ENCODE measurements at regions of chr5 and their contacts with region 1.

Region 1: GRCh38 chr5:96662725-96663513 is 743 bp downstream of the CAST start:
- DNase-seq: peak; percentile 94 to 96
- ATAC-seq: peak; percentile 80 to 88
- H3K4me3 ChIP-seq: peak overlapping the region; percentile 93
- H3K27ac ChIP-seq: peak overlapping the region; percentile 98 to 100
- H3K4me1 ChIP-seq: peaks cover 63% of the 10 kb centered on the region
- CTCF ChIP-seq: no peak
- EP300 ChIP-seq: no peak
- POLR2A ChIP-seq: peak; percentile 73
- RAD21 ChIP-seq: no peak

Region 2: GRCh38 chr5:95835682-95836385 is 827.1 kb before region 1 on chr5:
- CTCF ChIA-PET with region 1: no interaction called
- POLR2A ChIA-PET with region 1: interaction called, 17 read pairs
- DNase-seq: no peak
- ATAC-seq: no peak
- H3K4me3 ChIP-seq: peak overlapping the region; percentile 49
- H3K27ac ChIP-seq: peak overlapping the region; percentile 97 to 100
- H3K4me1 ChIP-seq: peaks cover 39% of the 10 kb centered on the region
- CTCF ChIP-seq: no peak
- EP300 ChIP-seq: no peak
- POLR2A ChIP-seq: no peak
- RAD21 ChIP-seq: no peak

Region 3: DNA sequence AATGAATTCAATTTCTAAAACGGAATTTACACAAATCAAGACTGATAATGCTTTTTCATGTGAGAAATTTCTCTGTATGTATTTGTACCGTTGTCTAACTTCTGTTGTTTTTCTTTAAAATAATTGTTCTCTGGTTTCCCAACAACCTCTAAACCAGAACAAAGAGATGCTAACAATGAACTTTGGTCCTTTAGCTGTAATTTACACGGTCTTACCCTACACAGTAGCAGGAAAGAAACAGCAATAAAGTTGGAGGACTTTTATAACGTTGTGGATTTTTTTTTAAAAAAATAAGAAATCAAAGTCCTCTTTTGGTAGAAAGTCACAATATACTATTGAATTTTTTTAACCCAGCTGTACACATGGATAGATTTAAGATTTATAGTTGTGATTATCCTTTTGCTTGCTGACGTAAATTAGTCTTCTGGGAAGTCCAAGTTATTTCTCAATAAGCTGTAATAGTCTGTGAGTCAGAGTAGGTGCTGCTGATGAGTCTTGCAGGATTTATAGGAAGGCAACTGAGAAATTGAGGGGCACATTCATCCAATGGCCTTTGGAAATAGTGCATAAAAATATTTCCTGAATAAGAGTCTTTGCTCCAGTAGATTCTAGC is 153.1 kb before region 1 on chr5:
- CTCF ChIA-PET with region 1: no interaction called
- POLR2A ChIA-PET with region 1: interaction called, 10 read pairs
- DNase-seq: peak; percentile 87 to 90
- ATAC-seq: peak; percentile 90 to 92
- H3K4me3 ChIP-seq: no peak overlapping the region
- H3K27ac ChIP-seq: peak overlapping the region; percentile 92 to 98
- H3K4me1 ChIP-seq: peaks cover 45% of the 10 kb centered on the region
- CTCF ChIP-seq: no peak
- EP300 ChIP-seq: peak; percentile 97 to 98
- POLR2A ChIP-seq: no peak
- RAD21 ChIP-seq: peak in 1 of 2 experiments; percentile 68; a peak in 3 of 5 replicates

Region 4: DNA sequence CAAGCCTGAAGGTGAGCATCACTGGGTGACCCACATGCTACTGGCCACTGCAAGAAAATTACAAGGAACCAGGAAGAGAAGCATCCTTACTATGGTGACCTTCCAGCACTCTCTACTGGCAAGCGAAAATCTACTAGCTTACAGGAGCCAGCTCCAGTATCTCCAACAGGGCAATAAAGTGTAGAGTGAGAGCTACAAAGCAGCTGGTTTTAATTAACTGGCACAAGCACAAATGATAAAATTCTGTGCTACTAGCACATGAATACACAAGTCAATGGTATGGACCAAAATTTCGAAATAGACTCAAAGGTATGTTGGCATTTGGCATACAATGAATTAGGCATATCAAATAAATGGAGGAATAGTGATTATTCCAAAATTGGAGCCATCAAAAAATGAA is 114.0 kb before region 1 on chr5:
- CTCF ChIA-PET with region 1: no interaction called
- POLR2A ChIA-PET with region 1: no interaction called
- DNase-seq: peak in 1 of 2 experiments; percentile 20
- ATAC-seq: peak in 1 of 2 experiments; percentile 54; a peak in 3 of 6 replicates
- H3K4me3 ChIP-seq: no peak overlapping the region
- H3K27ac ChIP-seq: peak overlapping the region in 1 of 2 experiments; percentile 29; a peak in 1 of 6 replicates
- H3K4me1 ChIP-seq: no peaks in the 10 kb centered on the region; the same call in 2 of the 3 replicates
- CTCF ChIP-seq: no peak
- EP300 ChIP-seq: no peak
- POLR2A ChIP-seq: no peak
- RAD21 ChIP-seq: 0 out of 5 replicates have a peak, but pooled peaks have one; percentile 12 to 16

Region 5: GRCh38 chr5:96629774-96630173 is 33.1 kb before region 1 on chr5:
- CTCF ChIA-PET with region 1: no interaction called
- POLR2A ChIA-PET with region 1: interaction called, 12 read pairs
- DNase-seq: peak; percentile 44 to 61
- ATAC-seq: peak; percentile 69 to 75; a peak in 5 of 6 replicates
- H3K4me3 ChIP-seq: no peak overlapping the region
- H3K27ac ChIP-seq: peak overlapping the region; percentile 62 to 77
- H3K4me1 ChIP-seq: peaks cover 60% of the 10 kb centered on the region
- CTCF ChIP-seq: no peak
- EP300 ChIP-seq: no peak
- POLR2A ChIP-seq: no peak
- RAD21 ChIP-seq: no peak

Region 6: DNA sequence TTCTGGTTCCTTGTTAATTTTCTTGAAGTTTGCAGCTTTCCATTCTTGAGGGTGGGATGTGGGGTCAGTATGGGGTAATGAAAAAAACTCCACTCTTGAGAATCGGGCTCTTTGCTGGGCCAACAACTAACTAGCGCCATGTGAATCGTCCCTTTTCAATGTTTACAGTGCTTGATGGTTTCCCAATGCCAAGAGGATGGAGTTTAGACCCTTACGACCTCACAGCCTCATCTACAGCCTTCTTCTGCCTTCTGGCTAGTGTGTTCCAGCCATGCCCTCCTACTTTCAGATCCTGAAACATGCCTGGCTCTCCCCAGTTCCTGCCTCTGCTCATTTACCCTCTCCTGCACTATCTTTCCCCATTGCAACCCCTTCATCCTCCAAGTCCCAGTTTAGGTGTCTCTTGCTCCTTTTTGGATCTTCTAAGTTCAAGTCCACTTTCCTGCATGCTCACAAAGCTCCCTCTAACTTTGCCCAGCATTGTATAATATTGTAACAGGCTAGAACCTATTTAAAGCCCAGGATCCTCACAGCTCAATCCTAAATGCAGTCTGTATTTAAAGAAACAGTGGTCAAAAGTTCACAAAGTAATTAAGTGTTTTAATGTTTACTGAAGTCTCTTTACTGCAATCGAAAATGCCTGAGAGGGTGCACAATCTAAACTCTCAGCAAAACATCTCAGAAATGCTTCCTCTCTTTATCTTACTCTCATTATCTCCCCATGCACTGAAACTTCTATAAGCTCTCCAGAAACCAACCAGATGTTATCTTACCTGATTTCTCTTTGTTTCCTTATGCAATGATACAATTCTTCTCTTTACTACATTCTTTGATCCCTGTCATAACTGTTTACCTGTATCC is 21.3 kb before region 1 on chr5:
- CTCF ChIA-PET with region 1: interaction called, 3 read pairs
- POLR2A ChIA-PET with region 1: interaction called, 12 read pairs
- DNase-seq: peak in 1 of 2 experiments; percentile 63
- ATAC-seq: peak; percentile 77 to 88
- H3K4me3 ChIP-seq: no peak overlapping the region
- H3K27ac ChIP-seq: peak overlapping the region; percentile 58 to 82
- H3K4me1 ChIP-seq: peaks cover 30% of the 10 kb centered on the region
- CTCF ChIP-seq: no peak
- EP300 ChIP-seq: no peak
- POLR2A ChIP-seq: no peak
- RAD21 ChIP-seq: no peak

Measured in A549 (cell line).